Left cardiac atrium (tissue), 4 donors: ENCODE measurements at regions of chr6 and their contacts with region 1.

Region 1: GRCh38 chr6:83160167-83160566 is 32.9 kb downstream of the PGM3 start:
- DNase-seq: no peak
- ATAC-seq: peak; percentile 27 to 65

Region 2: GRCh38 chr6:83127976-83128375 is 32.2 kb before region 1 on chr6:
- intact Hi-C with region 1: loop called in 1 of 2 experiments (anchors 5 kb)
- DNase-seq: no peak
- ATAC-seq: no peak